ENCODE measurements at regions of chr16 and their contacts with region 1.

Region 1: GRCh38 chr16:28823872-28824716 is 1.3 kb downstream of the ATXN2L start:
- DNase-seq: peak; percentile 96
- H3K4me3 Mint-ChIP-seq: peak overlapping the region; percentile 91
- H3K27ac Mint-ChIP-seq: peak overlapping the region; percentile 96
- H3K4me1 Mint-ChIP-seq: peaks cover 28% of the 10 kb centered on the region
- H3K27me3 Mint-ChIP-seq: no peaks in the 10 kb centered on the region
- CTCF ChIP-seq: peak; percentile 18

Region 2: GRCh38 chr16:28846080-28846932 is 22.2 kb after region 1 on chr16 and contains the start of gene TUFM:
- CTCF ChIA-PET with region 1: interaction called, 4 read pairs
- POLR2A ChIA-PET with region 1: interaction called, 104 read pairs
- intact Hi-C with region 1: no loop called
- DNase-seq: peak; percentile 97
- H3K4me3 Mint-ChIP-seq: peak within 1 kb of the TSS; percentile 99
- H3K27ac Mint-ChIP-seq: peak within 1 kb of the TSS; percentile 99
- H3K4me1 Mint-ChIP-seq: peaks cover 7% of the 10 kb centered on the region
- H3K27me3 Mint-ChIP-seq: no peaks in the 10 kb centered on the region
- CTCF ChIP-seq: peak; percentile 39
- total RNA-seq, gene TUFM: 184 and 198 TPM in 2 replicates

Region 3: GRCh38 chr16:28924732-28925385 is 100.8 kb after region 1 on chr16 and contains the start of gene RABEP2:
- CTCF ChIA-PET with region 1: no interaction called
- POLR2A ChIA-PET with region 1: interaction called, 27 read pairs
- intact Hi-C with region 1: no loop called
- DNase-seq: peak; percentile 95
- H3K4me3 Mint-ChIP-seq: peak within 1 kb of the TSS; percentile 85
- H3K27ac Mint-ChIP-seq: peak within 1 kb of the TSS; percentile 76
- H3K4me1 Mint-ChIP-seq: peaks cover 15% of the 10 kb centered on the region
- H3K27me3 Mint-ChIP-seq: no peaks in the 10 kb centered on the region
- CTCF ChIP-seq: no peak
- total RNA-seq, gene RABEP2: 10.7 and 17.8 TPM in 2 replicates